Body of pancreas (tissue), 4 donors: ENCODE measurements at regions of chr3 and their contacts with region 1.

Region 1: DNA sequence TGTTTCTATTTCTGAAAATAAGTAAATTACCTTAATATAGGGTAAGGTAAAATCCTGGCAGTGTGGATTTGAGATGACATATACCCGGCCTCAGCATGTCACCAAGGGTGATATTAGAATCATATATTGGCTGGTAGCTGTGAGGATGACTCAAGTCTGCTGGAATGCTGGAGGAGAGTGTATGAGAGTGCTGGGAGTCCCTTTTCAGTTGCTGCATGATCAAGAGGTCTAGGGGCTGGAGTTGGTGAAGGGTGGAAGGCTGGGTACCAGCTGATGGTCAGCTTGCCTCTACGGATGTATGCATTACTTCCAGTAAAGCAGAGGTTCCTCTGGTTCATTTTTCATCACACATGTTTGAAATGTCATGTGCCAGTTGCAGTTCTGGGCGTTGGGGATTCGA is 40.6 kb downstream of the SLC25A26 start:
- DNase-seq: no peak
- ATAC-seq: no peak
- H3K4me3 ChIP-seq: no peak overlapping the region
- H3K27ac ChIP-seq: no peak overlapping the region
- H3K4me1 ChIP-seq: no peaks in the 10 kb centered on the region
- H3K27me3 ChIP-seq: no peaks in the 10 kb centered on the region
- CTCF ChIP-seq: no peak
- POLR2A ChIP-seq: no peak

Region 2: GRCh38 chr3:66836363-66837152 is 575.2 kb after region 1 on chr3:
- intact Hi-C with region 1: loop called (anchors 10 kb)
- DNase-seq: no peak
- ATAC-seq: peak; percentile 62
- H3K4me3 ChIP-seq: no peak overlapping the region
- H3K27ac ChIP-seq: no peak overlapping the region
- H3K4me1 ChIP-seq: peaks cover 19% of the 10 kb centered on the region
- H3K27me3 ChIP-seq: no peaks in the 10 kb centered on the region
- CTCF ChIP-seq: peak in 6 of 7 experiments; percentile 18 to 62 (median 53)
- POLR2A ChIP-seq: no peak

Region 3: DNA sequence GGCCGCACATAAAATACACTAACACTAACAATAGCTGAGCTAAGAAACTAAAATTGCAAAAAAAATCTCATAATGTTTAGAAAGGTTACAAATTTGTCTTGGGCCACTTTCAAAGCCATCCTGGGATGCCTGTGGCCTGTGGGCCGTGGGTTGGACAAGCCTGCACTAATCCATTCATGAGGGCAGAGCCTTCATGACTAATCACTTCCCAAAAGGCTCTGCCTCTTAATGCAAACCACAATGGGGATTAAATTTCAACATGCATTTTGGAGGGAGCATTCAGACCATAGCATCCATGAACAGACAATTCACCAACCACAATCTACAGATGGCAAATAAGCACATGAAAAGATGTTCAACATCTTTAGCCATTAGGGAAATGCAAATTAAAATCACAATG is 1264.9 kb after region 1 on chr3:
- intact Hi-C with region 1: no loop called
- DNase-seq: no peak
- ATAC-seq: no peak
- H3K4me3 ChIP-seq: no peak overlapping the region
- H3K27ac ChIP-seq: no peak overlapping the region
- H3K4me1 ChIP-seq: no peaks in the 10 kb centered on the region
- H3K27me3 ChIP-seq: no peaks in the 10 kb centered on the region
- CTCF ChIP-seq: no peak
- POLR2A ChIP-seq: no peak